ENCODE measurements at regions of chr14 and their contacts with region 1.

Region 1: GRCh38 chr14:81453166-81453766 is 53.1 kb upstream of the STON2 start:
- DNase-seq: peak in 1 of 2 experiments; percentile 74
- H3K4me3 ChIP-seq: no peak overlapping the region
- H3K27ac ChIP-seq: no peak overlapping the region
- H3K4me1 ChIP-seq: peaks cover 0 to 10% (median 7%) of the 10 kb centered on the region in 4 experiments; a peak in 4 of 7 replicates
- H3K27me3 ChIP-seq: no peaks in the 10 kb centered on the region; a peak in 1 of 7 replicates
- CTCF ChIP-seq: peak; percentile 58 to 88 (median 81)
- EP300 ChIP-seq: no peak
- POLR2A ChIP-seq: no peak
- RAD21 ChIP-seq: peak; percentile 93 to 94

Region 2: DNA sequence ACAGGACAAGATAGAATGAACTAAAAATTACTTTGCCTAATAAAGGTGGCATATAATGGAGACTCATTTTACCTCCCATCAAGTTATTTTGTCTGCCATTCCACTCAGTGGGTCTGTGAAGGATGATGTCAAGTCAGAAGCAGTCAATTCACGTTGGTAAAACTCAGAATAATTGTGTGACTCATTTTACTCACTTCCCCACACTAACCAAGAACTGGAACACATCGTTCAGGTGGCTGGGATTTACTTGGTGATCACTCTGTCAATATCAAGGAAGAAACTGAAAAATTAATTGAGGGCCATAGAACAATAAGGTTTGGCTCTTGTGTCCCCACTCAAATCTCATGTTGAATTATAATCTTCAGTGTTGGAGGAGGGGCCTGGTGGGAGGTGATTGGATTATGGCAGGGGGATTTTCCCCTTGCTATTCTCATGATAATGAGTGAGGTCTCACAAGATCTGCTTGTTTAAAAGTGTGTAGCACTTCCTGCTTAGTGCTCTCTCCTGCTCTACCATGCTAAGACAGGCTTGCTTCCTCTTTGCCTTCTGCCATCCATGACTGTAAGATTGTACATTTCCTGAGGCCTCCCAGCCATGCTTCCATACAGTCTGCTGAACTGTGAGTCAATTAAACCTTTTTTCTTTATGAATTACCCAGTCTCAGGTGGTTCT is 196.8 kb before region 1 on chr14:
- CTCF ChIA-PET with region 1: interaction called, 426 read pairs
- POLR2A ChIA-PET with region 1: interaction called, 4 read pairs
- DNase-seq: no peak
- H3K4me3 ChIP-seq: no peak overlapping the region
- H3K27ac ChIP-seq: no peak overlapping the region
- H3K4me1 ChIP-seq: peaks cover 0 to 4% (median 1%) of the 10 kb centered on the region in 4 experiments; a peak in 1 of 7 replicates
- H3K27me3 ChIP-seq: no peaks in the 10 kb centered on the region
- CTCF ChIP-seq: no peak
- EP300 ChIP-seq: no peak
- POLR2A ChIP-seq: no peak
- RAD21 ChIP-seq: no peak

Region 3: DNA sequence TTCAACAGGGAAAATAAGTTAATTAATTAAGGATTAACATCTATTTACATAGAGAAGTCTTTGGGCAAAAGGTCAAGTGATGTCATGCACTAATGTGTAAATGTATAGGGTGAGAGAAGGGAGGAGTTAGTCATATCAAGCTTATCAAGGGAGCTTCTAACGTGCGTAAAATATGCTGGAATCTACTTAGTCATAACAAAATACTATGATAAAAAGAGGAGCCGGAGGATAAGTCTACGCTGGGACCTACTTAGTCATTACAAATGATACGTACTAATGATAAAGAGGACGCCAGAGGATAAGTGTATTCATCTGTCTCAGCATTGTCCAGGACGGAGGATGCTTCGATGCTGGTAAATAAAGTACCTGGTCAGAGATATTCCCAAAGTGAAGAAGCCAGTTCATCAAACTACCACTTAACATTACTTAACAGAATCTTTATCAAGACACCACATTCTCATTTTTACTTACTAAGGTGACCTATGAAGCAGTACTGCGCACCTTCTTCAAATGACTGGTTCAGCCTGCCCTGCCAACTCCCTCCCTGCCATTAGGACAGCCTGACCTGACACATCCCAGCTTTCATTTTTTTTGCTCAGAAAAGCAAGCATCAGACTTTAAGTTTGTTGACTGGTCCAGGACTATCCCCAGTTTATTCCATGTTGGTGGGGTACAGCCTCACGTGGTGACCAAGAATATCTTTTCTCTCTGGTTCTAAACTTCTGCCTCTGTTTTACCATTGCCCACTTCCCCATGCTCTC is 166.1 kb before region 1 on chr14:
- CTCF ChIA-PET with region 1: interaction called, 10 read pairs
- POLR2A ChIA-PET with region 1: no interaction called
- DNase-seq: no peak
- H3K4me3 ChIP-seq: no peak overlapping the region
- H3K27ac ChIP-seq: no peak overlapping the region
- H3K4me1 ChIP-seq: peaks cover 0 to 4% (median 2%) of the 10 kb centered on the region in 4 experiments; a peak in 2 of 7 replicates
- H3K27me3 ChIP-seq: no peaks in the 10 kb centered on the region
- CTCF ChIP-seq: no peak
- EP300 ChIP-seq: no peak
- POLR2A ChIP-seq: no peak
- RAD21 ChIP-seq: no peak

Region 4: DNA sequence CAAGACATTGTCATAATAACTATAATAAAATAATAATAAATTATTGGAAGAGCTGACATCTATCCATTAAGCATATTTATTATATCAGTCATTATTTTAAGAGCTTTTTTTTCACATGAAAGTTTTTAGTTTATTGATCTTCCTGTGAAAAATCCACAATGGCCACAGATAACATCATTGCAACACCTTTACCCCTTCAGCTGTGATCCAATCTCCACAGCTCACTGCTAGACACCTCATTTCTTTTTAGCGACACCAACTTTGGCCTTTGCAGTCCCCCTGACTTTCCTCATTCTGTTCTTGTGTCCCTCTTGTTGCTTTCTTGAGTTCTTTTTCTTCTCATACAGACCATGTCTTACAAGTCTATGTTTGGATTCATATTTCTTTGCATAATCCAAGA is 120.5 kb before region 1 on chr14:
- CTCF ChIA-PET with region 1: interaction called, 16 read pairs
- POLR2A ChIA-PET with region 1: no interaction called
- DNase-seq: no peak
- H3K4me3 ChIP-seq: no peak overlapping the region
- H3K27ac ChIP-seq: no peak overlapping the region
- H3K4me1 ChIP-seq: 0 out of 7 replicates have a peak, but pooled peaks cover 0 to 3% (median 0%) of the 10 kb centered on the region in 4 experiments
- H3K27me3 ChIP-seq: no peaks in the 10 kb centered on the region; a peak in 1 of 7 replicates
- CTCF ChIP-seq: no peak
- EP300 ChIP-seq: no peak
- POLR2A ChIP-seq: no peak
- RAD21 ChIP-seq: no peak

Region 5: DNA sequence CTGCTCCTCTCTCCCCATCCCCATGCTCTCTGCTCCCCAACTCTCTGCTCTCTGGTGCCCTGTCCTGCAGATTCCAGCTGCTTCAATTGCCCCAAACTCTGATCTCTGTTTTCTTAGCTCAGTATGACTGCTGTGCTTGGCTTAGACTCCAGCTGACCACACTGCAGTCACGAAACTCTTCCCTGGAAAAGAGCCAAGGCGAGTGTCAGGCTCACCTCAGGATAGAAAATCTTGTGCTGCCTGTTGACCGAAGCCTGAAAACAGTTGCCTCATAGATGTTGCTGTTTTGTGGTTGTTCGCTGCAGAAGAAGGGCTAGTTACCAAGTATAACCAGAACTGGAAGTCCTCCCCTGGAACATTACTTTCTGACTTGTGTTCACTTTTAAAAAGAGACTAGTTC is 46.4 kb before region 1 on chr14:
- CTCF ChIA-PET with region 1: interaction called, 11 read pairs
- POLR2A ChIA-PET with region 1: no interaction called
- DNase-seq: no peak
- H3K4me3 ChIP-seq: no peak overlapping the region
- H3K27ac ChIP-seq: no peak overlapping the region
- H3K4me1 ChIP-seq: no peaks in the 10 kb centered on the region
- H3K27me3 ChIP-seq: no peaks in the 10 kb centered on the region
- CTCF ChIP-seq: no peak
- EP300 ChIP-seq: no peak
- POLR2A ChIP-seq: no peak
- RAD21 ChIP-seq: no peak

Region 6: GRCh38 chr14:81436296-81437138 is 16.7 kb before region 1 on chr14:
- CTCF ChIA-PET with region 1: interaction called, 64 read pairs
- POLR2A ChIA-PET with region 1: no interaction called
- DNase-seq: peak in 1 of 2 experiments; percentile 87
- H3K4me3 ChIP-seq: peak overlapping the region; percentile 50 to 86 (median 75)
- H3K27ac ChIP-seq: no peak overlapping the region
- H3K4me1 ChIP-seq: peaks cover 7 to 16% (median 13%) of the 10 kb centered on the region in 4 experiments
- H3K27me3 ChIP-seq: peaks cover 1 to 14% (median 9%) of the 10 kb centered on the region in 4 experiments; a peak in 6 of 7 replicates
- CTCF ChIP-seq: no peak
- EP300 ChIP-seq: no peak
- POLR2A ChIP-seq: no peak
- RAD21 ChIP-seq: no peak

Region 7: DNA sequence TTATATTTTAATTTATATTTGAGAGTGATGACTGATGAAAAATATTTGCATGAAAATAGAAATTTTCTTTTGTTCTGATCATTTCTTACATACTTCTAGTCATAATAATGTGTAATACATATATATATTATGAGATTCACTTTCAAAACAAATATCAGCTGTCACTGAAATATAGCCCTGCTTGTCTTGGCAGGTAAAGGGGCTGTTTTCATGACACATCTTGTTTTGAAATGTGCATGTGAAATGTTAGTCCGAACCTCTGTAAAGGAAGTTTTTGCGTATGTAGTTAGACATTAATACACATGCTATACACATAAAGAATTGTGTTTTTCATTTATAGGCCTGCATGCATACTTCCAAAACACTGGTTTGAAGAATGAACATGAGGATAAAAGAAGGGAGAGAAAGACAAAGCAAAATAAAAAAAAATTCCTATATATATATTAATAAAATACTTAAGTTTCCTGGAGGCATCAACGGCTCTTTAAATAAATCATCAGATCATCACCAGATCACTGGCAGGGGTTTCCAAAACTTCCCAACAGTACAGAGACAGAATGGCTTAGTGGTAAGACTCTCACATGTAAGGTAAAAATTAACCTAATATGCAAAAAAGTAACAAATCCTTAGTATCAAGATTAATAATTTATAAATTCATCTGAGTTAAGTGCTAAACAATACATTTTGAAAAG is 20.3 kb after region 1 on chr14:
- CTCF ChIA-PET with region 1: interaction called, 14 read pairs
- POLR2A ChIA-PET with region 1: no interaction called
- DNase-seq: no peak
- H3K4me3 ChIP-seq: no peak overlapping the region
- H3K27ac ChIP-seq: no peak overlapping the region
- H3K4me1 ChIP-seq: no peaks in the 10 kb centered on the region
- H3K27me3 ChIP-seq: no peaks in the 10 kb centered on the region
- CTCF ChIP-seq: no peak
- EP300 ChIP-seq: no peak
- POLR2A ChIP-seq: no peak
- RAD21 ChIP-seq: no peak

Region 8: DNA sequence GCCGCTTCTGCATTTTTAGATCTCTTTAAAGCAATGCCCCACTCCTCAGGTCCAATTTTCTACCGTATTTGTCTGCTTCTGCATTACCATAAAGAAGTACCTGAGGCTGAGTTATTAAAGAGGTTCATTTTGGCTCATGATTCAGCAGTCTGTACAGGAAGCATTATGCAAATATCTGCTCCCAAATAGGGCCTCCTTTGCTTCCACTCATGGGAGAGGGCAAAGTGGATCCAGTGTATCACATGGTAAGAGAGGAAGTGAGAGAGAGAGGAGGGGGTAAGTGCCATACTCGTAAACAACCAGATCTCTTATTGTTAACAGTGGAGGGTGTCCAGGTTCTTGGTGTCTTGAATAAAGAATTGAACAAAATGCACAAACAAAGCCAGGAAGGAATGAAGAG is 396.4 kb after region 1 on chr14:
- CTCF ChIA-PET with region 1: no interaction called
- POLR2A ChIA-PET with region 1: no interaction called
- DNase-seq: no peak
- H3K4me3 ChIP-seq: no peak overlapping the region
- H3K27ac ChIP-seq: no peak overlapping the region
- H3K4me1 ChIP-seq: no peaks in the 10 kb centered on the region
- H3K27me3 ChIP-seq: no peaks in the 10 kb centered on the region
- CTCF ChIP-seq: no peak
- EP300 ChIP-seq: no peak
- POLR2A ChIP-seq: no peak
- RAD21 ChIP-seq: no peak